Left lung (tissue), 14 donors: ENCODE measurements at regions of chr14 and their contacts with region 1.

Region 1: DNA sequence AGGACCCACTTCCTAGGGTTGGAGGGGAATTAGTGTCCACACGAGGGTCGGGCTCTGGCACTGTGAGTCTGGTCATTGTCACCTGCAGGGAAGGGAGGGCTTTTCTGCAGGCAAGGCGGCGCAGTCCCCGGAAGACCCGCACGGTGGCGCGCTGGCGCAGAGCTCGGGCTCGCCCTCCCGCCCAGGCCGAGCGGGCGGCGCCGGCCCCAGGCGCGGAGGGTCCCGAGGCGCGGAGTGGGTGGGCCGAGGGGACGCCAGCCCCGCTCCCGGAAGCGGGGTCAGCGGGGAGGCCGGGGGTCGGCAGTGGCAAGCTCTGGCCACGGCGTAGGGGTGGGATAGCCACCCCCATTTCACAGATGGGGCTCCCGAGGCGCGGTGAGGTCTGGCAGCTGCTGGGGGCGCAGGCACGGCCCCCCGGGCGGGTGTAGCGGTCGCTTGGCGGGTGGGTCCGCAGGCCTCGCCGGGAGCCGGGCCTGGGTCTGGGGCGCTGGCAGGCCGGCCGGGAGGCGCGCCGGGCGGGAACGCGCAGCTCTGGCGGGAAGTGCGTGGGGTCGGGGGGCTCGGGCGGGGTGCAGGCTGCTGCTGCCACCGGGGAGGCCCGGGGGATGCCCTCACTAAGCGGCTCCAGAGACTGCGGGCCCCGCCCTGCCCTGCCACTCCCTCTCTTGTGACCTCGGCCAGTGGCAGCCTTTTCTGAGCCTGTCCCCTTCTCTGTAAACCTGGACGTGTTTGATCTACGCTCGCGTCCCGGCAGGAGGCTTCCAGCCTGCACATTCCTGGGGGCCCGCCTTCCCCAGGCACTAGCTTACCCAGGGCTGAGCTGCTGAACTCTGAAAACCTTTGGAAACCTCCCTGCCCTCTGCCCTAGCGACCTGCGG is 46.1 kb downstream of the CYP46A1 start:
- DNase-seq: peak; percentile 52 to 90 (median 70)
- ATAC-seq: peak; percentile 88
- H3K4me3 ChIP-seq: peak overlapping the region; percentile 40 to 43
- H3K27ac ChIP-seq: no peak overlapping the region
- H3K4me1 ChIP-seq: peaks cover 0 to 33% of the 10 kb centered on the region in 2 donors
- H3K27me3 ChIP-seq: peaks cover 0 to 45% of the 10 kb centered on the region in 2 donors
- CTCF ChIP-seq: peak; percentile 86 to 91

Region 2: GRCh38 chr14:99884834-99885648 is 154.8 kb after region 1 on chr14:
- intact Hi-C with region 1: loop called in 1 of 2 experiments (anchors 5 kb)
- DNase-seq: peak in 2 of 4 donors; percentile 56 to 71
- ATAC-seq: peak; percentile 91
- H3K4me3 ChIP-seq: no peak overlapping the region
- H3K27ac ChIP-seq: no peak overlapping the region
- H3K4me1 ChIP-seq: no peaks in the 10 kb centered on the region
- H3K27me3 ChIP-seq: no peaks in the 10 kb centered on the region
- CTCF ChIP-seq: peak; percentile 58 to 68